IMR-90 (cell line): ENCODE measurements at regions of chr6 and their contacts with region 1.

Region 1: GRCh38 chr6:55239099-55239498 is 64.8 kb downstream of the HCRTR2 start:
- DNase-seq: no peak
- ATAC-seq: no peak
- H3K4me3 ChIP-seq: no peak overlapping the region
- H3K27ac ChIP-seq: no peak overlapping the region
- H3K4me1 ChIP-seq: no peaks in the 10 kb centered on the region
- H3K27me3 ChIP-seq: no peaks in the 10 kb centered on the region
- CTCF ChIP-seq: no peak
- POLR2A ChIP-seq: no peak
- RAD21 ChIP-seq: no peak

Region 2: GRCh38 chr6:53979468-53980067 is 1259.5 kb before region 1 on chr6:
- CTCF ChIA-PET with region 1: no interaction called
- POLR2A ChIA-PET with region 1: no interaction called
- dilution Hi-C with region 1: no loop called
- in situ Hi-C with region 1: loop called (anchors 5 kb)
- intact Hi-C with region 1: loop called (anchors 2 kb)
- DNase-seq: peak; percentile 61
- ATAC-seq: peak; percentile 44; the same call in 1 of the 2 replicates
- H3K4me3 ChIP-seq: no peak overlapping the region
- H3K27ac ChIP-seq: no peak overlapping the region
- H3K4me1 ChIP-seq: peaks cover 4% of the 10 kb centered on the region
- H3K27me3 ChIP-seq: no peaks in the 10 kb centered on the region
- CTCF ChIP-seq: peak; percentile 83
- POLR2A ChIP-seq: no peak
- RAD21 ChIP-seq: peak; percentile 79

Region 3: DNA sequence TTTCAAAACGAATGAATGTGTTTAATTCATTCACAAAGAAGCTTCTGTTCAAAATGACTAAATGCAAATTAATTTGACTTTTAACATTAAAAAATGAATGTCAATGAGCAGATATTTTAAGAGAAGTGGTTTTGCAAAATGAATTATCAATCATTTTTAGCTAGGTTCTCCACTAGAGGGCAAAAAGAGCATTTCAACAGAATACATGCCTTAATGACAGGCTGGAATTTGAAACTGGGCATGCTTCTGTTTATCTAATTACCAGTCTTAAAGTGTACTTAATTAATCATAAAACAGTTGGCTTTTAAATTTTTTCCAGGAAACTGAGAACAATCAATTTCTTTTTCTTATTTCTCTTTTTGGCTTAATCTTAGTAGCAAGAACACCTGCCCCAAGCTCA is 994.7 kb before region 1 on chr6:
- CTCF ChIA-PET with region 1: no interaction called
- POLR2A ChIA-PET with region 1: no interaction called
- dilution Hi-C with region 1: no loop called
- in situ Hi-C with region 1: no loop called
- intact Hi-C with region 1: loop called (anchors 1 kb)
- DNase-seq: peak; percentile 24
- ATAC-seq: peak; percentile 37; the same call in 1 of the 2 replicates
- H3K4me3 ChIP-seq: no peak overlapping the region
- H3K27ac ChIP-seq: no peak overlapping the region
- H3K4me1 ChIP-seq: no peaks in the 10 kb centered on the region
- H3K27me3 ChIP-seq: no peaks in the 10 kb centered on the region
- CTCF ChIP-seq: peak; percentile 53
- POLR2A ChIP-seq: no peak
- RAD21 ChIP-seq: peak; percentile 61

Region 4: DNA sequence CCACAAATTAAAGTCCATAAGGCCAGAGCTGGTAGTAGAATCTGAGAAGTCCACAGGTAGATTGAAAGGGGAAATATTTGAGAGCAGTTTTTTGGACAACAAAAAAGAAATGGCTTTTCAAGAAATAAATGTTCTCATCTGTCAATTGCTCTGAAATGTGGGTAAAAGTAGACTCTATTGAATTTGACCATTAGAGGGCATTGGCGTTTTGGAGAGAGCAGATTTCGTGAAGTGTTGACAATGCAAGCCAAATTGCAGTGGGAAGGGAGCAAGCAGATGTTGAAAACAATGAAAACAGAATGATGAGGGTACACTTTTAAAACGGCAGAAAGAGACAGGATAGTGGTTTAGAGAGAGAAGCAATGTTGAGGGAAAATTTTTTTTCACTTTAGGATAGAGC is 541.7 kb before region 1 on chr6:
- CTCF ChIA-PET with region 1: no interaction called
- POLR2A ChIA-PET with region 1: no interaction called
- dilution Hi-C with region 1: no loop called
- in situ Hi-C with region 1: no loop called
- intact Hi-C with region 1: loop called (anchors 5 kb)
- DNase-seq: peak; percentile 16
- ATAC-seq: peak; percentile 64; the same call in 1 of the 2 replicates
- H3K4me3 ChIP-seq: no peak overlapping the region
- H3K27ac ChIP-seq: no peak overlapping the region
- H3K4me1 ChIP-seq: no peaks in the 10 kb centered on the region
- H3K27me3 ChIP-seq: no peaks in the 10 kb centered on the region
- CTCF ChIP-seq: peak; percentile 43
- POLR2A ChIP-seq: no peak
- RAD21 ChIP-seq: peak; percentile 47

Region 5: DNA sequence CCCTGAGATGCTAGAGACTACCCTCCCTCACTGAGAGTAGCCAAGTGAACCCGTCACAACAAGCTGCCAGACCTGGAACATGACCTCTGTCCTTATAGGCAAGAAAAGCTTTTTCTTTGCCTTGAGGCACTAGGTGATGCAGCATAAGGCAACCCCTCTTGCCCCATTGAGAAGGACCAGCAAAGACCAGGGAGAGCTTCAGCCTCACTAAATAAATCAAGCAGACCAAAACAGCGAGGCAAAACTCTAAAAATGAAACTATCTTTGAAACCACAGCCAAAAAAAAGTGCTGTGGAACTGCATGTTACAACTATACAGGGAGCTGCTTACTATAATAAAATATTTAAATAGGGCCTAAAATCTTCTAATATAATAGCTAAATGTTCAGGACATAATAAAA is 455.1 kb before region 1 on chr6:
- CTCF ChIA-PET with region 1: no interaction called
- POLR2A ChIA-PET with region 1: no interaction called
- dilution Hi-C with region 1: no loop called
- in situ Hi-C with region 1: no loop called
- intact Hi-C with region 1: no loop called
- DNase-seq: peak; percentile 1
- ATAC-seq: peak; percentile 42
- H3K4me3 ChIP-seq: 0 out of 2 replicates have a peak overlapping the region, but pooled peaks have one; percentile 1
- H3K27ac ChIP-seq: no peak overlapping the region; the same call in 1 of the 2 replicates
- H3K4me1 ChIP-seq: no peaks in the 10 kb centered on the region; the same call in 1 of the 2 replicates
- H3K27me3 ChIP-seq: no peaks in the 10 kb centered on the region
- CTCF ChIP-seq: no peak
- POLR2A ChIP-seq: no peak
- RAD21 ChIP-seq: no peak

Region 6: DNA sequence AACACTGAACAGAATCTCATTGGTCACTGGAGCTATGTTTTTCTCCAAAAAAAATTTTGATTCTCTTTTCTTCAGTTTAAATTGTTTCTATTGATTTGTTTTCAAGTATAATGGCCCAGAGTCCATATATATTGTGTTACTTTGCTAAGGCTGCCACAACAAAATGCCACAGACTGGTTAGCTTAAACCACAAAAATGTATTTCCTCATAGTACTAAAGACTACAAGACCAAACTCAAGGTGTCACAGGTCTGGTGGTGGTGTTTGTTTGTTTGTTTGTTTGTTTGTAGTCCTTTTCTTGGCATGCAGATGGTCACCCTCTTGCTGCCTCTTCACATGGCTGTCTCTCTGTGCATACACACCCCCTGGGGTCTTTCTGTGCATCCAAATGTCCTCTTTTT is 602.2 kb after region 1 on chr6:
- CTCF ChIA-PET with region 1: no interaction called
- POLR2A ChIA-PET with region 1: no interaction called
- dilution Hi-C with region 1: no loop called
- in situ Hi-C with region 1: no loop called
- intact Hi-C with region 1: no loop called
- DNase-seq: no peak
- ATAC-seq: no peak
- H3K4me3 ChIP-seq: no peak overlapping the region
- H3K27ac ChIP-seq: no peak overlapping the region
- H3K4me1 ChIP-seq: no peaks in the 10 kb centered on the region
- H3K27me3 ChIP-seq: no peaks in the 10 kb centered on the region
- CTCF ChIP-seq: no peak
- POLR2A ChIP-seq: no peak
- RAD21 ChIP-seq: no peak